ENCODE measurements at regions of chr1 and their contacts with region 1.

Region 1: GRCh38 chr1:50710093-50710492 is 250.0 kb downstream of the FAF1 start:
- DNase-seq: no peak
- H3K4me3 ChIP-seq: no peak overlapping the region
- H3K27ac ChIP-seq: no peak overlapping the region
- H3K27me3 ChIP-seq: no peaks in the 10 kb centered on the region
- CTCF ChIP-seq: no peak

Region 2: GRCh38 chr1:50620680-50621329 is 89.3 kb before region 1 on chr1:
- intact Hi-C with region 1: loop called in 1 of 2 experiments (anchors 10 kb)
- DNase-seq: no peak
- H3K4me3 ChIP-seq: peak overlapping the region in 1 of 59 donors; percentile 3
- H3K27ac ChIP-seq: peak overlapping the region in 2 of 59 donors; percentile 1 to 17
- H3K27me3 ChIP-seq: no peaks in the 10 kb centered on the region
- CTCF ChIP-seq: peak in 51 of 56 donors; percentile 16 to 70 (median 47)

Region 3: GRCh38 chr1:50852889-50853288 is 142.8 kb after region 1 on chr1:
- intact Hi-C with region 1: no loop called
- DNase-seq: peak in 2 of 10 donors; percentile 13 to 31
- H3K4me3 ChIP-seq: peak overlapping the region in 7 of 59 donors; percentile 3 to 43 (median 13)
- H3K27ac ChIP-seq: peak overlapping the region in 21 of 59 donors; percentile 4 to 69 (median 31)
- H3K27me3 ChIP-seq: no peaks in the 10 kb centered on the region
- CTCF ChIP-seq: no peak